A549 (cell line): ENCODE measurements at regions of chr10 and their contacts with region 1.

Region 1: DNA sequence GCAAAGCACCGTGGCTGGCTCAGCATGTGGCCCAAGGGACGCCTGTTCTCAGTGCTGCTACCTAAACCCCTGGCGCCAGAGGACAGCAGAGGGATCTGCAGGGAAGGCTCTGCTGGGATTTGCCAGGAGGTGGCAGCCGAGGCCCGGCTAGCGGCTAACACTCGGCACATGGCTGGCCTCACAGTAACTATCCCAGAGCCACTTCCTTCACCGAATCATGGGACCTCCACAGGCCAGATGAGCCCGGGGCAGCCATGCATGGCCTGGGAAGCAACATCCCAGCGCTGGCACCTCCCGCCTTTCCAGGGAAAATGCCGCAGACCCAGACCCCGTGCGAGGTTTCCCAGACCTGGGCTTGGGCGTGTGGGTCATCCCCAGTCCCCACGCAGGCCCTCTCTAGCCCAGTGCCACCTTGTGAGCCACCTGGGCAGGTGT is 36.4 kb downstream of the DPYSL4 start:
- DNase-seq: peak; percentile 85
- ATAC-seq: peak; percentile 92 to 99
- H3K4me3 ChIP-seq: no peak overlapping the region
- H3K27ac ChIP-seq: peak overlapping the region; percentile 30 to 80; a peak in 3 of 6 replicates
- H3K4me1 ChIP-seq: peaks cover 6% of the 10 kb centered on the region; the same call in 2 of the 3 replicates
- CTCF ChIP-seq: peak; percentile 97
- EP300 ChIP-seq: no peak
- POLR2A ChIP-seq: no peak
- RAD21 ChIP-seq: peak; percentile 97 to 98

Region 2: GRCh38 chr10:132248455-132249225 is 25.5 kb after region 1 on chr10:
- CTCF ChIA-PET with region 1: interaction called, 13 read pairs
- POLR2A ChIA-PET with region 1: no interaction called
- DNase-seq: peak; percentile 67 to 84
- ATAC-seq: peak; percentile 70 to 85
- H3K4me3 ChIP-seq: peak overlapping the region; percentile 47
- H3K27ac ChIP-seq: peak overlapping the region; percentile 37 to 67; a peak in 5 of 6 replicates
- H3K4me1 ChIP-seq: peaks cover 10% of the 10 kb centered on the region
- CTCF ChIP-seq: no peak
- EP300 ChIP-seq: no peak
- POLR2A ChIP-seq: peak; percentile 76
- RAD21 ChIP-seq: no peak

Region 3: GRCh38 chr10:132354356-132355094 is 131.4 kb after region 1 on chr10:
- CTCF ChIA-PET with region 1: interaction called, 49 read pairs
- POLR2A ChIA-PET with region 1: no interaction called
- DNase-seq: no peak
- ATAC-seq: no peak
- H3K4me3 ChIP-seq: no peak overlapping the region
- H3K27ac ChIP-seq: no peak overlapping the region
- H3K4me1 ChIP-seq: no peaks in the 10 kb centered on the region
- CTCF ChIP-seq: no peak
- EP300 ChIP-seq: no peak
- POLR2A ChIP-seq: no peak
- RAD21 ChIP-seq: no peak

Region 4: GRCh38 chr10:132360766-132361447 is 137.7 kb after region 1 on chr10:
- CTCF ChIA-PET with region 1: interaction called, 49 read pairs
- POLR2A ChIA-PET with region 1: no interaction called
- DNase-seq: peak; percentile 29 to 44
- ATAC-seq: peak; percentile 57 to 87; a peak in 4 of 6 replicates
- H3K4me3 ChIP-seq: no peak overlapping the region
- H3K27ac ChIP-seq: no peak overlapping the region
- H3K4me1 ChIP-seq: no peaks in the 10 kb centered on the region
- CTCF ChIP-seq: peak; percentile 51
- EP300 ChIP-seq: no peak
- POLR2A ChIP-seq: no peak
- RAD21 ChIP-seq: peak; percentile 19 to 32; a peak in 2 of 5 replicates

Region 5: GRCh38 chr10:132371641-132372081 is 148.5 kb after region 1 on chr10:
- CTCF ChIA-PET with region 1: interaction called, 11 read pairs
- POLR2A ChIA-PET with region 1: no interaction called
- DNase-seq: no peak
- ATAC-seq: peak in 1 of 2 experiments; percentile 81; a peak in 3 of 6 replicates
- H3K4me3 ChIP-seq: no peak overlapping the region
- H3K27ac ChIP-seq: no peak overlapping the region
- H3K4me1 ChIP-seq: no peaks in the 10 kb centered on the region
- CTCF ChIP-seq: peak; percentile 36
- EP300 ChIP-seq: no peak
- POLR2A ChIP-seq: no peak
- RAD21 ChIP-seq: peak; percentile 35 to 51; a peak in 4 of 5 replicates